H1 (cell line): ENCODE measurements at regions of chr4 and their contacts with region 1.

Region 1: DNA sequence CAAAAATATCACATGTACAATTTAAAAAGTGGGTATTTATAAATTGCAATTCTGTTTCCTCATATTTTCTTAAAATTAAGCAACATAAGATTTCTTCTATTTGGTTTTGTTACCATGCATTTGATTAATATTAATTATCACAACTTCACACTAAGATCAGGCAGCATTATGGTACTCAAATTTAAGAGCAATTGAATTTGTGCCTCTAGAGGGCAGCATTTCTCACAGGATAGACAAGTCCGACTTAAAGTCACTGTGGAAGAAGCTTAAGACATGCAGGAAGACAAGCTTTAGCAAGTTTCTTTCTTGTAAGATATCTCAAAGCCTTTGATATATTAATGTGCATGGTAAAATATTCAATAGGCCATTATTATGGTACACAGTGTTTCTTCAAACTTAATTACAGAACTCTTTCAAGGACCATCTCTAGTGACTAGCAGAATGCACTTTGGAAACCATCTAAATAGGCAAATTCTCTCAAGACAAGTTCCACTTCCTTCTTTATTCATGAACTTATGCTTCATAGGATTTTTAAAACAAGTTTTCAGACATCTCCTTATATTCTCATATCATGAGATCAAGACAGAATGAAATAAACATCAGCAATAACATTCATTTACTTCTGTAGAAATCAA is 35.0 kb downstream of the FBXW7 start:
- DNase-seq: peak in 1 of 2 experiments; percentile 27
- H3K4me3 ChIP-seq: no peak overlapping the region
- H3K27ac ChIP-seq: no peak overlapping the region
- H3K4me1 ChIP-seq: no peaks in the 10 kb centered on the region
- H3K27me3 ChIP-seq: no peaks in the 10 kb centered on the region
- CTCF ChIP-seq: peak in 2 of 3 experiments; percentile 55 to 73; a peak in 2 of 4 replicates
- EP300 ChIP-seq: no peak
- POLR2A ChIP-seq: no peak
- RAD21 ChIP-seq: peak; percentile 82 to 86

Region 2: DNA sequence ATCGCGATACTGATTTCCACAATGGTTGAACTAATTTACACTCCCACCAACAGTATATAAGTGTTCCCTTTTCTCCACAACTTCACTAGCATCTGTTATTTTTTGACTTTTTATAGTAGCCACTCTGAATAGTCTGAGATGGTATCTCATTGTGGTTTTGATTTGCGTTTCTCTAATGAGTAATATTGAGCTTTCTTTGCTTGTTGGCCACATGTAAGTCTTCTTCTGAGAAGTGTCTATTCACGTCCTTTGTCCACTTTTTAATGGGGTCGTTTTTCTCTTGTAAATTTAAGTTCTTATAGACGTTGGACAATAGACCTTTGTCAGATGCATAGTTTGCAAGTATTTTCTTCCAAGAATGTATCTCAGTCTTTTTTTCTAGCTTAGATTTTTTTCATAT is 25.0 kb after region 1 on chr4:
- CTCF ChIA-PET with region 1: interaction called, 11 read pairs
- POLR2A ChIA-PET with region 1: no interaction called
- DNase-seq: no peak
- H3K4me3 ChIP-seq: no peak overlapping the region
- H3K27ac ChIP-seq: no peak overlapping the region
- H3K4me1 ChIP-seq: no peaks in the 10 kb centered on the region; a peak in 1 of 7 replicates
- H3K27me3 ChIP-seq: no peaks in the 10 kb centered on the region
- CTCF ChIP-seq: no peak
- EP300 ChIP-seq: no peak
- POLR2A ChIP-seq: no peak
- RAD21 ChIP-seq: no peak

Region 3: DNA sequence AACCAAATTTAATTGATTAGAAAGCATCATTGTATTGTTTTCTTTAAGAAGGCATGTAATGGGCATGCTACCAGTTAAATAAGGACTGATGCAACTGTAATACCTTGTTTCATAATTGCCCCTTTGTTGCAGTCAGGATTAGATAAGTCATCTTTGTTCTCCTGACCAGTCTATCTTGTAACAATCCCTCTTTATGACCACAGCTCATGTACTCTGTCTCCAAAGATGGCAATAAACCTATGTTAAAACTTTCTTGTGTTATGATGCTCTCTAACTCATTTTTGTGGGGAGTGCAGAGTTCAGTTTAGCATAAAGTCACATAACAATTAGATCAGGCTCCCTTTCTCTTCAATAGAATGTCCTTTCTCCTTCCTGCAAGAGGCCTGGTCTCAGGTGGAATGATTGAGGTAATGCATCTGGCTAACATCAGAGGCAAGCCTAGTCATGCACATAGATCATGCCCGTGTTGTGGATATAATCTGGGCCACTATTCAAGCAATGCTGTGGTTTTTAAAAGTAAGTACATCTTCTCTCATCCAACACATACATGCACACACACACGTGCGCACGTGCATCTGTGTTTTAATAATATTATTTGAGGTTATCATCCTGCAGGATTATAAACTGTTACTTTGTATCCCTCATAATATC is 133.3 kb after region 1 on chr4:
- CTCF ChIA-PET with region 1: interaction called, 65 read pairs
- POLR2A ChIA-PET with region 1: interaction called, 3 read pairs
- DNase-seq: no peak
- H3K4me3 ChIP-seq: no peak overlapping the region
- H3K27ac ChIP-seq: 0 out of 2 replicates have a peak overlapping the region, but pooled peaks have one; percentile 3
- H3K4me1 ChIP-seq: peaks cover 0 to 3% (median 1%) of the 10 kb centered on the region in 4 experiments; a peak in 2 of 7 replicates
- H3K27me3 ChIP-seq: no peaks in the 10 kb centered on the region
- CTCF ChIP-seq: no peak
- EP300 ChIP-seq: no peak
- POLR2A ChIP-seq: no peak
- RAD21 ChIP-seq: no peak

Region 4: DNA sequence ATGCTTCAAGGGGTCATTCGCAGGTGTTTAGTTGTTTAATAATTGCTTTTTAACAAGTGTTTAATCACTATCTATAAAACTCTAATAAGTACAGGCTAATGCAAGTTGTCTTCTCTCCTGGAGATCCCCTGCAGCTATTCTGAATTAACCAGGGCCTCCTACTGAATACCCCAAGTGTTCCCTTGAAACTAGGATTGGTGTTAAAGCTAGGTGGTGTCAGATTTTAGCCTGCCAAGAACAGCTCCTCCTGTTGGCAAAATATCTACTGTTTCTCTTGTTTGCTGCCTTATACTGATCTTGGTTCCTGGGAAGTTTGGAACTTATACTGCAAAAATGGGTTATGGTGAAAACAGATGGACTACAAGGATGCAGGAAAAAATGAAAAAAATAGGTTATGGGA is 205.0 kb after region 1 on chr4:
- CTCF ChIA-PET with region 1: interaction called, 24 read pairs
- POLR2A ChIA-PET with region 1: no interaction called
- DNase-seq: no peak
- H3K4me3 ChIP-seq: no peak overlapping the region
- H3K27ac ChIP-seq: no peak overlapping the region
- H3K4me1 ChIP-seq: peaks cover 7 to 21% (median 14%) of the 10 kb centered on the region in 4 experiments; a peak in 6 of 7 replicates
- H3K27me3 ChIP-seq: no peaks in the 10 kb centered on the region
- CTCF ChIP-seq: peak in 2 of 3 experiments; percentile 62 to 69; a peak in 3 of 4 replicates
- EP300 ChIP-seq: no peak
- POLR2A ChIP-seq: no peak
- RAD21 ChIP-seq: peak; percentile 33 to 62